A673 (cell line): ENCODE measurements at regions of chr3 and their contacts with region 1.

Region 1: DNA sequence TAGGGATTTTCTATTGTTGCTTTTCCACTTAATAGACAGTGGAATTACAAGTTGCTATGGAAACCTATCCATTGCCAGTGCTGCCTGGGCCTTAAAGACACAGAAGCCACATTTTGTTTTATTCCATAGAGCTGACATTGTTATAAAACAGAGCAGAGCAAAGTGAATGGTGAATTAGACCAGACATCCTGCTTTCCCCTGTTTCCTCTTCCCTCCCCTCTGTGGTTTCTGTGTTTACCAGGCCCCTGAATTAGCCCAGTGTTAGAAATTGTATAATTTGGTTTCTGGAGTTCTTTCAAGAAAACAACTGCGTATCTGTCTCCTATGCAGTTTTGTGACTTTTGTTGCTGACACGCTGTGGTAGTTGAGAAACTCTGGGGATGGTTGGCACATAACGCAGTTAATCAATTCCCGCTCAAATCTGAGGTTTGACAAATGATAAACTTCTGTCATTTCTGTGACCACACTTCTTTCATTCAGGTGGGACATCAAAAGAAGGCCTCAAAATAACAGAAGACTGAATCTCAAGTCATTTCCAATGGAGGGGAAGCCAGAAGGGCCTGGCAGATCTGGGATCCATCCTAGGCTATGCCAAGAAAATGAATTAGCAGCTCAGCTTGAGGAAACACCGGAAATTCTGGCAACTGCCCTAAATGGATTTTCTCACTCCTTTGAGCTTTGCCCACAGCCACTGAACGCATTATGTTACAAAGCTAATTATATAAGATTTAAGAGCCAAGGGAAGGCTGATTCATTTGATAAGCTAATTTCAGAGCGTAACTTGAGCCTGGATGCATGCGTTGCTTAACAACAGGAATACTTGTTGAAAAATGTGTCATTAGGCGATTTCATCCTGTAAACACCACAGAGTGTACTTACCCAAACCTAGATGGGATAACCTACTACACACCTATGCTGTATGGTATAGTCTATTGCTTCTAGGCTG is 46.9 kb downstream of the NR1D2 start:
- DNase-seq: peak; percentile 99
- H3K4me3 ChIP-seq: peak overlapping the region; percentile 9
- H3K27ac ChIP-seq: peak overlapping the region; percentile 95
- H3K4me1 ChIP-seq: peaks cover 51% of the 10 kb centered on the region
- H3K27me3 ChIP-seq: no peaks in the 10 kb centered on the region
- CTCF ChIP-seq: no peak

Region 2: DNA sequence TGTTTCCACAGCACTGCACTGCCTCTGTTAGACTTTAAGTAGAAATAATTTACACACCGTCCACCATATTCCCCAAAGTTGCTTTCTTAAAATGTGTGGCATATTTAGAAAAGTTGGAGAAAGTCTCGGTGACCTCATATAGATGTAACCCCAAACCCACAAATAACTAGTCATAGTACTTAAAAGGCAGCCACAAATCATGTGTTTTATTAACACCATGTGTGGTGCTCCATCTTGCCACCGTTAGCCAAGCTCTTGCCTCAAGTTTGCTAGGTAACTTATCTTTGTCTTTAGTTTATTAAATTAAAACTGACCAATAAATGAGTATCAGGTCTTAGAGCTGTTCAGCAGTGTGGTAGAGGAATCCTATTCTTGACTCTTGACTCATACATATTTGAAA is 530.9 kb before region 1 on chr3:
- CTCF ChIA-PET with region 1: no interaction called
- POLR2A ChIA-PET with region 1: no interaction called
- intact Hi-C with region 1: no loop called
- DNase-seq: no peak
- H3K4me3 ChIP-seq: no peak overlapping the region
- H3K27ac ChIP-seq: no peak overlapping the region
- H3K4me1 ChIP-seq: no peaks in the 10 kb centered on the region
- H3K27me3 ChIP-seq: no peaks in the 10 kb centered on the region
- CTCF ChIP-seq: no peak

Region 3: GRCh38 chr3:23894254-23895061 is 97.5 kb before region 1 on chr3:
- CTCF ChIA-PET with region 1: no interaction called
- POLR2A ChIA-PET with region 1: no interaction called
- intact Hi-C with region 1: loop called (anchors 5 kb)
- DNase-seq: no peak
- H3K4me3 ChIP-seq: no peak overlapping the region
- H3K27ac ChIP-seq: no peak overlapping the region
- H3K4me1 ChIP-seq: no peaks in the 10 kb centered on the region
- H3K27me3 ChIP-seq: no peaks in the 10 kb centered on the region
- CTCF ChIP-seq: no peak

Region 4: DNA sequence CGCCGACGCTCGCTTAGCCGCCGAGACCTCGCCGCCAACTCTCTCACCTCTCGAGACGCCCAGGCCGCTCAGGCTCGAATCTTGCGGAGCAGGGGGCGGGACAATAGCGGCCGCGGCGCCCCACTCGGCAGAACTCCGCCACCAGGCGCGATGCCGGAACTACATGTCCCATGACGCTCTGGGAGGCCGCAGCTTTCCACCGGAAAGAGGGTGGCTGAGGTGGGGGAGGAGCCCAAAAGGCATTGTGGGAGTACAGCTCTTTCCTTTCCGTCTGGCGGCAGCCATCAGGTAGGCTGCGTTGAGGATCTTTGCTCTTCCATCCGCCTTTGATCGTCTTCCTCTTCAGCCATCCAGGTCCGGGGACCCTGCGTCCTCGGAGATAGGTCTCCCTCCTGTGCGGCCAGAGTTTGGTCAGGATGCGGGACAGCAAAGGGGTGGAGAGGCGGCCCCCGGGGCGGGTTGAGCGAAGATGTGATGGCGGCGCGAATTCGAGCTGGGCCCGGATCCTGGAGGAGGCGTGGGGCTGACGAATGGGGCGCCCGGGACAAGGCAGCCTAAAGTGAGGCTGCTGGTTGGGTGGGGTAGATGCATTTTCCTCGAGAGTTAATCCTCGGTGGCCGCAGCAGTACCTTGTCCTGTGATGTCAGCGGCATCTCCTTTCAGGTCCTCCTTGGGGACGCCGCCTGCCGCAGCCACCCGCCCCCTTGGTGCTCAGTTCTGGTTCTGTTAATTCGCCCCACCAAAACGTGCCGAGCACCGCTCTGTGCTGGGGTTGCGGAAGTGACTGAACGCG is 74.9 kb before region 1 on chr3 and contains the starts of genes NKIRAS1 and RPL15:
- CTCF ChIA-PET with region 1: no interaction called
- POLR2A ChIA-PET with region 1: interaction called, 20 read pairs
- intact Hi-C with region 1: loop called (anchors 2 kb)
- DNase-seq: peak; percentile 99
- H3K4me3 ChIP-seq: peak within 1 kb of the TSS; percentile 87
- H3K27ac ChIP-seq: peak within 1 kb of the TSS; percentile 92
- H3K4me1 ChIP-seq: peaks cover 10% of the 10 kb centered on the region
- H3K27me3 ChIP-seq: no peaks in the 10 kb centered on the region
- CTCF ChIP-seq: peak; percentile 30; the same call in 1 of the 2 replicates
- total RNA-seq, gene NKIRAS1: 17.9 and 23.0 TPM in 2 replicates
- total RNA-seq, gene RPL15: 1,911 and 1,939 TPM in 2 replicates

Region 5: GRCh38 chr3:23945903-23946751 is 45.8 kb before region 1 on chr3:
- CTCF ChIA-PET with region 1: no interaction called
- POLR2A ChIA-PET with region 1: no interaction called
- intact Hi-C with region 1: loop called (anchors 1 kb)
- DNase-seq: peak; percentile 98
- H3K4me3 ChIP-seq: peak overlapping the region; percentile 66
- H3K27ac ChIP-seq: peak overlapping the region; percentile 87
- H3K4me1 ChIP-seq: peaks cover 7% of the 10 kb centered on the region
- H3K27me3 ChIP-seq: no peaks in the 10 kb centered on the region
- CTCF ChIP-seq: no peak

Region 6: DNA sequence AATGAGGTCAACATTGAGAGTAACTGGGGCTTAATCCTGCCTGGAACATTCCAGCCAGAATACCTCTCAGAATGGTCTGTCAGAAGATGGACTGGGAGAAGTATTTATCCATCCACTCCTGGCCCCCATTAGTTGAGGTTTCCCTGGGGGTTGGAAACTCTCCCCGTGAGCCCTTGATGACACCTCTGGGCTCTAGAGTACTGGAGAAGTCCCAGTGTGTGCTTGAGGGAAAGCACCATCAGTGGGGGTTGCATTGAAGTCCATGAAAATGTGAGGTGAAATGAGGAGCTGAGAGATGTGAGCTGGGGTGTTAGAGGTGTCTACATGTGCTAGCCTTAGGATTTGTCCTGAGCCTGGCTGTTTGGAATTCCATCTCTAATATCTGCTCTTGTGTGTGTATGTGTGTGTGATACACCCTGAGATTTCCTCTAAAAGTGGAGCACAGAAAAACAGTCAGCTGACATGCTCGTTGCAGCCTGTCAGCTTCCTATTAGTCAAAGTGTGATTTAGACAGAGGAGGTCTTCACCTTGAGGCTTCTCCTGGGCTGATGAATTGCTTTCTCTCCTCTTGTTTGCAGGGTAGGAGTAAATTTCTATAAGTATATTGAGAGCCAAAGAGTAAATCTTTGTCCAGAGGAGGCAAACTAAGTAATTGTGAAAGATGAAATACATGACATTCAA is 20.8 kb after region 1 on chr3:
- CTCF ChIA-PET with region 1: no interaction called
- POLR2A ChIA-PET with region 1: no interaction called
- intact Hi-C with region 1: no loop called
- DNase-seq: no peak
- H3K4me3 ChIP-seq: no peak overlapping the region
- H3K27ac ChIP-seq: no peak overlapping the region
- H3K4me1 ChIP-seq: no peaks in the 10 kb centered on the region
- H3K27me3 ChIP-seq: no peaks in the 10 kb centered on the region
- CTCF ChIP-seq: no peak